IMR-90 (cell line): ENCODE measurements at regions of chr4 and their contacts with region 1.

Region 1: DNA sequence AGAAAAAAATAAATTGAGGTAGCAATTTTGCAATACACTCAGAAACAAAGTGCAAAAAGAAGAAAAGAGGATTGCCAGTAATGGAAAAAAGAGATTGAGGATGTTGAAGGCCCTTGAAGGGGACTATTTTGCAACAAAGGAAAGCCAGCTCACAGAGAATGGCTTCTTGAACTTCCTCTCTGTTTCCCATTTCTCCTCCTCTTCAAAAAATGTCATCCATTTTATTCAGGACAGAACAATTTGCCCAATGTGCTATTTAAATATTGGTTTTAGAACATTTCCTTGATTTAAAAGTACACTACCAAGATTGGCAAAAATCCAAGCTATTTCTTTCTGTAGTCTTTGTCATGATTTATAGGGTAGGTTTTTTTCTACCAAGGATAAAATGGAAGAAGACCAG is 60.2 kb downstream of the GASK1B start:
- DNase-seq: no peak
- ATAC-seq: no peak
- H3K4me3 ChIP-seq: no peak overlapping the region
- H3K27ac ChIP-seq: no peak overlapping the region
- H3K4me1 ChIP-seq: no peaks in the 10 kb centered on the region; the same call in 1 of the 2 replicates
- H3K27me3 ChIP-seq: no peaks in the 10 kb centered on the region
- CTCF ChIP-seq: no peak
- POLR2A ChIP-seq: no peak
- RAD21 ChIP-seq: no peak

Region 2: DNA sequence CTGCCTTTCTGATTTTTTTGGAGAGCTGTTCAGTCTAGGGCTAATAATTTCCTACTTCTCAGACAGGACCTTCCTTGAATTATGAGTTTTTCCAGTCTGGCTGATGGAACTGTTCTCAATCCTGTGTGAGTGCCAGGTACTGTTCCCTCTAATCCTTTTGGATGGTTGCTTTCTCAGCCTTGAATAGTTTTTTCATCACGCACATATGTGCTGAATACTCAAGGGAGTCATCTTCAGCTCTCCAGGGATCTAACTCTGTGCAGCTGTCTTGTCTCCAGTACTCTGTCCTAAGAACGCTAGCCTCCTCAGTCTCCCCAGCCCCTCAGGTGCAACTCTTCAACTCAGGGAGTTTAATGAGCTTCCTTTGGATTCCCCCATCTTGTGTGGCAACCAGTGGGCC is 33.0 kb before region 1 on chr4:
- CTCF ChIA-PET with region 1: no interaction called
- POLR2A ChIA-PET with region 1: interaction called, 5 read pairs
- dilution Hi-C with region 1: no loop called
- in situ Hi-C with region 1: no loop called
- intact Hi-C with region 1: loop called (anchors 5 kb)
- DNase-seq: no peak
- ATAC-seq: no peak
- H3K4me3 ChIP-seq: no peak overlapping the region
- H3K27ac ChIP-seq: no peak overlapping the region
- H3K4me1 ChIP-seq: no peaks in the 10 kb centered on the region
- H3K27me3 ChIP-seq: no peaks in the 10 kb centered on the region
- CTCF ChIP-seq: no peak
- POLR2A ChIP-seq: no peak
- RAD21 ChIP-seq: no peak

Region 3: GRCh38 chr4:158094413-158095134 is 18.0 kb before region 1 on chr4:
- CTCF ChIA-PET with region 1: no interaction called
- POLR2A ChIA-PET with region 1: no interaction called
- dilution Hi-C with region 1: no loop called
- in situ Hi-C with region 1: no loop called
- intact Hi-C with region 1: no loop called
- DNase-seq: peak; percentile 71
- ATAC-seq: peak; percentile 57
- H3K4me3 ChIP-seq: no peak overlapping the region
- H3K27ac ChIP-seq: no peak overlapping the region
- H3K4me1 ChIP-seq: peaks cover 2% of the 10 kb centered on the region; the same call in 1 of the 2 replicates
- H3K27me3 ChIP-seq: no peaks in the 10 kb centered on the region
- CTCF ChIP-seq: no peak
- POLR2A ChIP-seq: no peak
- RAD21 ChIP-seq: no peak

Region 4: DNA sequence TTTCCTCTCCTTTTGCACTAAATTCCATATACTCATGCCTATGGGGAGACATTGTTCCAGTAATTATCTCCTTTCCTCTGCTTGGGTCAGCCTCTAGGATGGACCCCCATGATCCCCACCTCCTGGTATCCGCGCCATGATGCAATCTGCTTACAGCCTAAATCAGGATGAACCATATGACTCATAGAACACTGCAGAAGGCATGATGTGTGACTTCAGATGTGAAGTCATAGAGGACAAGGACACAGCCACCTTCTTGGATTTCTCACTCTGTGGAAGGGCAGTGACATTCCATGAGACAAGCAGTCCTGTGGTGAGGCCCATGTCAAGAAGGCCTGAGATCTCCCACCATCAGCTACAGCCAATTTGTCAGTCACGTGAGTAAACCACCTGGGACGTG is 88.7 kb after region 1 on chr4:
- CTCF ChIA-PET with region 1: no interaction called
- POLR2A ChIA-PET with region 1: no interaction called
- dilution Hi-C with region 1: no loop called
- in situ Hi-C with region 1: no loop called
- intact Hi-C with region 1: no loop called
- DNase-seq: no peak
- ATAC-seq: no peak
- H3K4me3 ChIP-seq: no peak overlapping the region
- H3K27ac ChIP-seq: no peak overlapping the region
- H3K4me1 ChIP-seq: no peaks in the 10 kb centered on the region
- H3K27me3 ChIP-seq: peaks cover 8% of the 10 kb centered on the region
- CTCF ChIP-seq: no peak
- POLR2A ChIP-seq: no peak
- RAD21 ChIP-seq: no peak

Region 5: GRCh38 chr4:158302076-158302866 is 189.6 kb after region 1 on chr4:
- CTCF ChIA-PET with region 1: no interaction called
- POLR2A ChIA-PET with region 1: no interaction called
- dilution Hi-C with region 1: no loop called
- in situ Hi-C with region 1: no loop called
- intact Hi-C with region 1: no loop called
- DNase-seq: peak; percentile 80
- ATAC-seq: peak; percentile 57
- H3K4me3 ChIP-seq: no peak overlapping the region
- H3K27ac ChIP-seq: no peak overlapping the region
- H3K4me1 ChIP-seq: peaks cover 2% of the 10 kb centered on the region; the same call in 1 of the 2 replicates
- H3K27me3 ChIP-seq: no peaks in the 10 kb centered on the region
- CTCF ChIP-seq: no peak
- POLR2A ChIP-seq: no peak
- RAD21 ChIP-seq: no peak

Region 6: DNA sequence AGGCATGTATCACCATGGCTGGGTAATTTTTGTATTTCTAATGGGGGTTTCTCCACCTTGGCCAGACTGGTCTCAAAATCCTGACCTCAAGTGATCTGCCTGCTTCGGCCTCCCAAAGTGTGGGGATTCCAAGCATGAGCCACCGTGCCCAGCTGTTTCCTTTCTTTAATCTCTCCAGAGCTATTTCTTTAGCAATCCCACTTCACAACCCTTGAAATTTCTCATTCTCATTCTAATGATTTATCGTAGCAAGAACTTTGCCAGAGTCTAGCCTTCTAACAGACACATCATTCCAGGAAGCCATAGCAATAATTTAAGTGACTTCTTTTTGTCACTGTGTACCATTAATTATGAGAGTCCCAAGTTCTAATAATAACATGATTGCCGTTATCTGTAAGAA is 477.7 kb after region 1 on chr4:
- CTCF ChIA-PET with region 1: no interaction called
- POLR2A ChIA-PET with region 1: no interaction called
- dilution Hi-C with region 1: no loop called
- in situ Hi-C with region 1: no loop called
- intact Hi-C with region 1: no loop called
- DNase-seq: no peak
- ATAC-seq: no peak
- H3K4me3 ChIP-seq: no peak overlapping the region
- H3K27ac ChIP-seq: no peak overlapping the region
- H3K4me1 ChIP-seq: no peaks in the 10 kb centered on the region
- H3K27me3 ChIP-seq: no peaks in the 10 kb centered on the region; the same call in 1 of the 2 replicates
- CTCF ChIP-seq: no peak
- POLR2A ChIP-seq: no peak
- RAD21 ChIP-seq: no peak